H1 (cell line): ENCODE measurements at regions of chr15 and their contacts with region 1.

Region 1: GRCh38 chr15:74906446-74907162 is at the start of gene FAM219B:
- DNase-seq: peak in 1 of 2 experiments; percentile 90
- H3K4me3 ChIP-seq: peak within 1 kb of the TSS; percentile 79 to 94 (median 90)
- H3K27ac ChIP-seq: peak within 1 kb of the TSS; percentile 71
- H3K4me1 ChIP-seq: peaks cover 2 to 4% (median 3%) of the 10 kb centered on the region in 4 experiments
- H3K27me3 ChIP-seq: no peaks in the 10 kb centered on the region
- CTCF ChIP-seq: no peak
- EP300 ChIP-seq: no peak
- POLR2A ChIP-seq: peak; percentile 61 to 69; a peak in 2 of 3 replicates
- RAD21 ChIP-seq: no peak
- total RNA-seq, gene FAM219B: 56.1 and 57.1 TPM in 2 replicates

Region 2: GRCh38 chr15:74695597-74696397 is 210.8 kb before region 1 on chr15 and contains the start of gene EDC3:
- CTCF ChIA-PET with region 1: no interaction called
- POLR2A ChIA-PET with region 1: no interaction called
- DNase-seq: peak; percentile 33 to 95
- H3K4me3 ChIP-seq: peak within 1 kb of the TSS; percentile 82 to 97 (median 92)
- H3K27ac ChIP-seq: peak within 1 kb of the TSS; percentile 76
- H3K4me1 ChIP-seq: peaks cover 0 to 5% (median 3%) of the 10 kb centered on the region in 4 experiments; a peak in 4 of 7 replicates
- H3K27me3 ChIP-seq: no peaks in the 10 kb centered on the region; a peak in 3 of 7 replicates
- CTCF ChIP-seq: 0 out of 4 replicates have a peak, but pooled peaks of 1 of the 3 experiments have one; percentile 8
- EP300 ChIP-seq: 0 out of 3 replicates have a peak, but pooled peaks of 1 of the 2 experiments have one; percentile 20
- POLR2A ChIP-seq: peak in 1 of 2 experiments; percentile 85; a peak in 2 of 3 replicates
- RAD21 ChIP-seq: no peak
- total RNA-seq, gene EDC3: 49.1 and 50.8 TPM in 2 replicates

Region 3: GRCh38 chr15:74826364-74826819 is 80.2 kb before region 1 on chr15 and contains the start of gene CPLX3:
- CTCF ChIA-PET with region 1: interaction called, 11 read pairs
- POLR2A ChIA-PET with region 1: no interaction called
- DNase-seq: peak in 1 of 2 experiments; percentile 84
- H3K4me3 ChIP-seq: peak within 1 kb of the TSS in 2 of 4 experiments; percentile 5 to 41; a peak in 3 of 8 replicates
- H3K27ac ChIP-seq: no peak within 1 kb of the TSS
- H3K4me1 ChIP-seq: peaks cover 0 to 9% (median 4%) of the 10 kb centered on the region in 4 experiments; a peak in 4 of 7 replicates
- H3K27me3 ChIP-seq: peaks cover 4 to 47% (median 29%) of the 10 kb centered on the region in 4 experiments
- CTCF ChIP-seq: no peak
- EP300 ChIP-seq: no peak
- POLR2A ChIP-seq: no peak
- RAD21 ChIP-seq: no peak
- total RNA-seq, gene CPLX3: not detected in 2 replicates

Region 4: GRCh38 chr15:74842581-74843444 is 63.8 kb before region 1 on chr15 and contains the start of gene ULK3:
- CTCF ChIA-PET with region 1: interaction called, 23 read pairs
- POLR2A ChIA-PET with region 1: interaction called, 9 read pairs
- DNase-seq: peak; percentile 89 to 95
- H3K4me3 ChIP-seq: peak within 1 kb of the TSS; percentile 60 to 92 (median 90)
- H3K27ac ChIP-seq: peak within 1 kb of the TSS; percentile 89
- H3K4me1 ChIP-seq: peaks cover 0 to 13% (median 8%) of the 10 kb centered on the region in 4 experiments; a peak in 6 of 7 replicates
- H3K27me3 ChIP-seq: no peaks in the 10 kb centered on the region
- CTCF ChIP-seq: peak; percentile 60 to 68 (median 62)
- EP300 ChIP-seq: no peak
- POLR2A ChIP-seq: peak in 1 of 2 experiments; percentile 54; a peak in 2 of 3 replicates
- RAD21 ChIP-seq: peak in 1 of 2 experiments; percentile 35; a peak in 1 of 4 replicates
- total RNA-seq, gene ULK3: 25.0 and 27.1 TPM in 2 replicates

Region 5: DNA sequence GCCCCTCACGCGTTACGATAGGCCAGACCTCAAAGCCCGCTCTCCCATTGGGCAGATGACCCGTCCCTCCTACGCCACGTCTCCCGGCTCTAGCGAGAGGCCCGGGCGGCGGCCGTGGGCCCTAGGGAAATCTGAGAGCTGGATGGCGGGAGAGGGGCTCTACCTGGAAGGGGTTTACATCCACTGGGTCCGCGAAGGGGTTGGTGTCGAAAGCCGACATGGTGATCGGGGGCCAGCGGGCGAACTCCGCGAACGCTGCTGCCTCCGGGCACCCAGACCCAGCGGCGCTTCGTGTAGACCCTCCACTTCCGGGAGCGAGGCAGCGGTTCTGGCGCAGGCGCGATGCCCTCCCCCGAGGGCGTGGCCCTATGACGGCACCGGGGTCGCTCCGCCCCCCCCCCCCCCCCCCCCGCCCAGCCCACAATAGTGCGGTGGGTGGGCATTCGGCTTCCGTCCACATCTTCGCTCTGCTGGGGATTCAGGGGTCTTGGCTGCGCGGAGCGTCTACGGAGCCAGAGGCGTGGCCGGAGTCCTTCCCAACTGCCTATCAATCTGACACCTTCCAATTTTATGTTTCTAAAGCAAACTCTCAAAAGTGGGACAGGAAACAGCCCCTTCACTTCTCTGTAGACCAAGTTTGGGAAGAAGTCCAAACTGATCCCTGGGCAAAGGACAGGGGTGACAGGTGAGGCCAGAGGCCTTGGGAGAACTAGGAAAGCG is 33.4 kb before region 1 on chr15 and contains the start of gene SCAMP2:
- CTCF ChIA-PET with region 1: interaction called, 16 read pairs
- POLR2A ChIA-PET with region 1: interaction called, 4 read pairs
- DNase-seq: peak; percentile 84 to 96
- H3K4me3 ChIP-seq: peak within 1 kb of the TSS; percentile 80 to 98 (median 93)
- H3K27ac ChIP-seq: peak within 1 kb of the TSS; percentile 92; the same call in 1 of the 2 replicates
- H3K4me1 ChIP-seq: peaks cover 0 to 3% (median 0%) of the 10 kb centered on the region in 4 experiments; a peak in 1 of 7 replicates
- H3K27me3 ChIP-seq: no peaks in the 10 kb centered on the region
- CTCF ChIP-seq: no peak
- EP300 ChIP-seq: no peak
- POLR2A ChIP-seq: peak; percentile 81 to 92
- RAD21 ChIP-seq: no peak
- total RNA-seq, gene SCAMP2: 40.3 and 41.7 TPM in 2 replicates

Region 6: GRCh38 chr15:74889883-74890664 is 16.5 kb before region 1 on chr15 and contains the start of gene MPI:
- CTCF ChIA-PET with region 1: interaction called, 54 read pairs
- POLR2A ChIA-PET with region 1: interaction called, 116 read pairs
- DNase-seq: peak in 1 of 2 experiments; percentile 93
- H3K4me3 ChIP-seq: peak within 1 kb of the TSS; percentile 80 to 96 (median 88)
- H3K27ac ChIP-seq: peak within 1 kb of the TSS; percentile 90
- H3K4me1 ChIP-seq: peaks cover 0 to 4% (median 2%) of the 10 kb centered on the region in 4 experiments; a peak in 4 of 7 replicates
- H3K27me3 ChIP-seq: no peaks in the 10 kb centered on the region
- CTCF ChIP-seq: no peak
- EP300 ChIP-seq: peak in 1 of 2 experiments; percentile 17; a peak in 1 of 3 replicates
- POLR2A ChIP-seq: peak; percentile 92 to 97
- RAD21 ChIP-seq: no peak
- total RNA-seq, gene MPI: 31.0 and 32.9 TPM in 2 replicates

Region 7: GRCh38 chr15:74950078-74951000 is 43.7 kb after region 1 on chr15:
- CTCF ChIA-PET with region 1: interaction called, 52 read pairs
- POLR2A ChIA-PET with region 1: interaction called, 16 read pairs
- DNase-seq: peak in 1 of 2 experiments; percentile 97
- H3K4me3 ChIP-seq: no peak overlapping the region
- H3K27ac ChIP-seq: no peak overlapping the region
- H3K4me1 ChIP-seq: peaks cover 3 to 19% (median 9%) of the 10 kb centered on the region in 4 experiments
- H3K27me3 ChIP-seq: peaks cover 0 to 6% (median 4%) of the 10 kb centered on the region in 4 experiments; a peak in 5 of 7 replicates
- CTCF ChIP-seq: peak; percentile 77 to 100 (median 90)
- EP300 ChIP-seq: no peak
- POLR2A ChIP-seq: no peak
- RAD21 ChIP-seq: peak; percentile 93

Region 8: GRCh38 chr15:75042730-75043508 is 136.3 kb after region 1 on chr15:
- CTCF ChIA-PET with region 1: no interaction called
- POLR2A ChIA-PET with region 1: no interaction called
- DNase-seq: peak in 1 of 2 experiments; percentile 73
- H3K4me3 ChIP-seq: no peak overlapping the region
- H3K27ac ChIP-seq: no peak overlapping the region
- H3K4me1 ChIP-seq: peaks cover 0 to 12% (median 8%) of the 10 kb centered on the region in 4 experiments; a peak in 5 of 7 replicates
- H3K27me3 ChIP-seq: no peaks in the 10 kb centered on the region
- CTCF ChIP-seq: peak; percentile 68 to 80 (median 79)
- EP300 ChIP-seq: no peak
- POLR2A ChIP-seq: no peak
- RAD21 ChIP-seq: peak; percentile 76 to 82